ENCODE measurements at regions of chr2 and their contacts with region 1.

Region 1: GRCh38 chr2:70553584-70554337 is at the start of gene TGFA:
- DNase-seq: peak; percentile 51 to 69 (median 68)
- ATAC-seq: peak; percentile 85
- H3K4me3 ChIP-seq: peak within 1 kb of the TSS; percentile 65
- H3K4me3 Mint-ChIP-seq: peak within 1 kb of the TSS; percentile 79 to 96 (median 90)
- H3K27ac ChIP-seq: peak within 1 kb of the TSS; percentile 60
- H3K27ac Mint-ChIP-seq: peak within 1 kb of the TSS; percentile 46 to 89 (median 79)
- H3K4me1 ChIP-seq: peaks cover 14 to 21% of the 10 kb centered on the region in 2 donors
- H3K4me1 Mint-ChIP-seq: peaks cover 15 to 37% (median 32%) of the 10 kb centered on the region in 7 donors
- H3K27me3 ChIP-seq: no peaks in the 10 kb centered on the region
- H3K27me3 Mint-ChIP-seq: peaks cover 0 to 77% (median 4%) of the 10 kb centered on the region in 5 donors
- total RNA-seq, gene TGFA: 0.98 to 3.2 (median 2.3) TPM in 4 of 5 experiments, not detected in the other

Region 2: GRCh38 chr2:68715353-68716041 is 1838.3 kb before region 1 on chr2:
- CTCF ChIA-PET with region 1: no interaction called
- POLR2A ChIA-PET with region 1: no interaction called
- intact Hi-C with region 1: no loop called
- DNase-seq: no peak
- ATAC-seq: peak; percentile 59
- H3K4me3 ChIP-seq: no peak overlapping the region
- H3K4me3 Mint-ChIP-seq: peak overlapping the region in 9 of 10 donors; percentile 23 to 66 (median 49)
- H3K27ac ChIP-seq: peak overlapping the region; percentile 17
- H3K27ac Mint-ChIP-seq: peak overlapping the region; percentile 34 to 96 (median 88)
- H3K4me1 ChIP-seq: peaks cover 59 to 63% of the 10 kb centered on the region in 2 donors
- H3K4me1 Mint-ChIP-seq: peaks cover 51 to 83% (median 81%) of the 10 kb centered on the region in 7 donors
- H3K27me3 ChIP-seq: no peaks in the 10 kb centered on the region
- H3K27me3 Mint-ChIP-seq: no peaks in the 10 kb centered on the region

Region 3: GRCh38 chr2:70340921-70341765 is 212.6 kb before region 1 on chr2:
- CTCF ChIA-PET with region 1: interaction called, 5 read pairs
- POLR2A ChIA-PET with region 1: no interaction called
- intact Hi-C with region 1: loop called in 1 of 2 experiments (anchors 1 kb)
- DNase-seq: peak; percentile 11 to 64 (median 45)
- ATAC-seq: peak; percentile 80
- H3K4me3 ChIP-seq: no peak overlapping the region
- H3K4me3 Mint-ChIP-seq: peak overlapping the region in 1 of 10 donors; percentile 27
- H3K27ac ChIP-seq: no peak overlapping the region
- H3K27ac Mint-ChIP-seq: no peak overlapping the region
- H3K4me1 ChIP-seq: peaks cover 0 to 8% of the 10 kb centered on the region in 2 donors
- H3K4me1 Mint-ChIP-seq: peaks cover 0 to 13% (median 11%) of the 10 kb centered on the region in 7 donors
- H3K27me3 ChIP-seq: no peaks in the 10 kb centered on the region
- H3K27me3 Mint-ChIP-seq: peaks cover 0 to 26% (median 0%) of the 10 kb centered on the region in 5 donors

Region 4: GRCh38 chr2:70440621-70441020 is 113.1 kb before region 1 on chr2:
- CTCF ChIA-PET with region 1: interaction called, 3 read pairs
- POLR2A ChIA-PET with region 1: no interaction called
- intact Hi-C with region 1: loop called in 1 of 2 experiments (anchors 2 kb)
- DNase-seq: peak in 7 of 9 donors; percentile 54 to 79 (median 74)
- ATAC-seq: peak; percentile 90
- H3K4me3 ChIP-seq: peak overlapping the region; percentile 29
- H3K4me3 Mint-ChIP-seq: peak overlapping the region; percentile 27 to 83 (median 76)
- H3K27ac ChIP-seq: peak overlapping the region; percentile 39
- H3K27ac Mint-ChIP-seq: peak overlapping the region; percentile 77 to 98 (median 91)
- H3K4me1 ChIP-seq: peaks cover 11 to 54% of the 10 kb centered on the region in 2 donors
- H3K4me1 Mint-ChIP-seq: peaks cover 23 to 78% (median 67%) of the 10 kb centered on the region in 7 donors
- H3K27me3 ChIP-seq: no peaks in the 10 kb centered on the region
- H3K27me3 Mint-ChIP-seq: peaks cover 0 to 13% (median 0%) of the 10 kb centered on the region in 5 donors

Region 5: DNA sequence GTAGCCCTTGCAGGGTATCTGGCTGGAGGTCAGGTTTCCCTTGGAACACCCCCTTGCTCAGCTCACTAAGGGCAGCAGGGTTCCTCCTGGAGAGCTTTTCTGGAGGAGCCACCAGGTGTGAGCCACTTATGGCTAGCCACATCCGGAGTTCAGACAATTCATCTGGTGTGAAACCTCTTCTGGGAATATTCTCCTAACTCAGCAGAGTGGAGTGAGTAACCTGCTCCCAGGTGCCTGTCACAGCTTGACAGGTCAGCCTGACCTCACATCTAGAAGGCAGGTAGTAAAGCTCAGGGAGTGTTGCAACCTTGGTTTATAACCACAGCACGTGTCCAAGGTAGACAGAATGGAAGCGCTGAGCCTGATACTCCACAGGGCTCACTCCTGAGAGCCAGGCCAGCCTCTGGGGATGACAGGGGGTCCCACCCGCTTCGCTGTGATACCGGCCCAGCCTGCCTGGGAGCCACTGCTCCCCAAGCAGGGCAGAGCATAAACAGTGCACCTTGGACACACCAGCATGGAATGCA is 62.5 kb after region 1 on chr2:
- CTCF ChIA-PET with region 1: interaction called, 12 read pairs
- POLR2A ChIA-PET with region 1: interaction called, 3 read pairs
- intact Hi-C with region 1: loop called (anchors 1 to 2 kb)
- DNase-seq: no peak
- ATAC-seq: no peak
- H3K4me3 ChIP-seq: no peak overlapping the region
- H3K4me3 Mint-ChIP-seq: no peak overlapping the region
- H3K27ac ChIP-seq: no peak overlapping the region
- H3K27ac Mint-ChIP-seq: no peak overlapping the region
- H3K4me1 ChIP-seq: no peaks in the 10 kb centered on the region
- H3K4me1 Mint-ChIP-seq: peaks cover 0 to 2% (median 0%) of the 10 kb centered on the region in 7 donors
- H3K27me3 ChIP-seq: no peaks in the 10 kb centered on the region
- H3K27me3 Mint-ChIP-seq: peaks cover 0 to 17% (median 0%) of the 10 kb centered on the region in 5 donors

Region 6: DNA sequence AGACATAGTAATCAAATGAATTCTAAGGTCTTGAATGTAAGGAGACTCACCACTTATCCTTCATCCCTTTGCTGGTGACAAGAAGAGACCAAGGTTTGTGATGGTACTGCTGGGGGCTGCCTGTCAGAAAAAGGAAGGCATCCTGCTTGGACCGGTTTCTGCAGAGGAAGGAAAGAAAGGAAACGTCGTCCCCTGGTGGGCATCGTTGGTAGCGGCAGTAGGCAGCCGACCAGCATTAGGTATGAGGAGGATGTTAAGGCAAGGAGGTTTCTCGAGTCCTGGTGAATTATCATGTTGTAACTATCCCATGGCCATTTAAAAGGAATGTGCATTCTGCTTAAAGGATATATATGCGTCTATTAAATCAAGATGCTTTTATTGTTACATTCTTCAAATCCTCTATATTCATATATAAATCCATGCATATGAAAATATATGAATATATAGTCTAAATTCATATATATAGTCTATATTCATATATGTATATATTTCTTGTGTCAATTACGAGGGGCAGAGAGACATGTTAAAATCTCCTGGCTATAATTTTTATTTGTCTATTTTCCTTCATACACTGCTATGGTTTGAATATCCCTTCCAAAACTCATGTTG is 94.2 kb after region 1 on chr2:
- CTCF ChIA-PET with region 1: interaction called, 3 read pairs
- POLR2A ChIA-PET with region 1: no interaction called
- intact Hi-C with region 1: loop called (anchors 1 to 5 kb)
- DNase-seq: peak; percentile 55 to 81 (median 75)
- ATAC-seq: peak; percentile 85
- H3K4me3 ChIP-seq: no peak overlapping the region
- H3K4me3 Mint-ChIP-seq: no peak overlapping the region
- H3K27ac ChIP-seq: no peak overlapping the region
- H3K27ac Mint-ChIP-seq: peak overlapping the region in 1 of 9 donors; percentile 13
- H3K4me1 ChIP-seq: no peaks in the 10 kb centered on the region
- H3K4me1 Mint-ChIP-seq: no peaks in the 10 kb centered on the region
- H3K27me3 ChIP-seq: no peaks in the 10 kb centered on the region
- H3K27me3 Mint-ChIP-seq: peaks cover 0 to 30% (median 4%) of the 10 kb centered on the region in 5 donors

Region 7: GRCh38 chr2:70767699-70768589 is 214.2 kb after region 1 on chr2 and contains the start of gene ADD2:
- CTCF ChIA-PET with region 1: interaction called, 4 read pairs
- POLR2A ChIA-PET with region 1: no interaction called
- intact Hi-C with region 1: loop called in 1 of 2 experiments (anchors 5 kb)
- DNase-seq: peak; percentile 11 to 53 (median 40)
- ATAC-seq: peak; percentile 82
- H3K4me3 ChIP-seq: peak within 1 kb of the TSS; percentile 73
- H3K4me3 Mint-ChIP-seq: peak within 1 kb of the TSS; percentile 76 to 96 (median 90)
- H3K27ac ChIP-seq: peak within 1 kb of the TSS; percentile 46
- H3K27ac Mint-ChIP-seq: peak within 1 kb of the TSS; percentile 25 to 92 (median 63)
- H3K4me1 ChIP-seq: peaks cover 5 to 7% of the 10 kb centered on the region in 2 donors
- H3K4me1 Mint-ChIP-seq: peaks cover 14 to 38% (median 20%) of the 10 kb centered on the region in 7 donors
- H3K27me3 ChIP-seq: peaks cover 0 to 3% of the 10 kb centered on the region in 2 donors
- H3K27me3 Mint-ChIP-seq: peaks cover 0 to 62% (median 19%) of the 10 kb centered on the region in 5 donors
- total RNA-seq, gene ADD2: 5.8 to 18.8 (median 7.7) TPM

Region 8: GRCh38 chr2:70789304-70790135 is 235.8 kb after region 1 on chr2:
- CTCF ChIA-PET with region 1: no interaction called
- POLR2A ChIA-PET with region 1: no interaction called
- intact Hi-C with region 1: loop called in 1 of 2 experiments (anchors 5 kb)
- DNase-seq: peak; percentile 44 to 70 (median 67)
- ATAC-seq: peak; percentile 81
- H3K4me3 ChIP-seq: peak overlapping the region; percentile 43
- H3K4me3 Mint-ChIP-seq: peak overlapping the region; percentile 79 to 93 (median 86)
- H3K27ac ChIP-seq: no peak overlapping the region
- H3K27ac Mint-ChIP-seq: peak overlapping the region in 1 of 9 donors; percentile 69
- H3K4me1 ChIP-seq: no peaks in the 10 kb centered on the region
- H3K4me1 Mint-ChIP-seq: peaks cover 9 to 22% (median 12%) of the 10 kb centered on the region in 7 donors
- H3K27me3 ChIP-seq: peaks cover 0 to 5% of the 10 kb centered on the region in 2 donors
- H3K27me3 Mint-ChIP-seq: peaks cover 41 to 70% (median 47%) of the 10 kb centered on the region in 5 donors

Measured in naive thymus-derived CD4-positive, alpha-beta T cell (primary cell).